Esophagus squamous epithelium (tissue), 5 donors: ENCODE measurements at regions of chr22 and their contacts with region 1.

Region 1: DNA sequence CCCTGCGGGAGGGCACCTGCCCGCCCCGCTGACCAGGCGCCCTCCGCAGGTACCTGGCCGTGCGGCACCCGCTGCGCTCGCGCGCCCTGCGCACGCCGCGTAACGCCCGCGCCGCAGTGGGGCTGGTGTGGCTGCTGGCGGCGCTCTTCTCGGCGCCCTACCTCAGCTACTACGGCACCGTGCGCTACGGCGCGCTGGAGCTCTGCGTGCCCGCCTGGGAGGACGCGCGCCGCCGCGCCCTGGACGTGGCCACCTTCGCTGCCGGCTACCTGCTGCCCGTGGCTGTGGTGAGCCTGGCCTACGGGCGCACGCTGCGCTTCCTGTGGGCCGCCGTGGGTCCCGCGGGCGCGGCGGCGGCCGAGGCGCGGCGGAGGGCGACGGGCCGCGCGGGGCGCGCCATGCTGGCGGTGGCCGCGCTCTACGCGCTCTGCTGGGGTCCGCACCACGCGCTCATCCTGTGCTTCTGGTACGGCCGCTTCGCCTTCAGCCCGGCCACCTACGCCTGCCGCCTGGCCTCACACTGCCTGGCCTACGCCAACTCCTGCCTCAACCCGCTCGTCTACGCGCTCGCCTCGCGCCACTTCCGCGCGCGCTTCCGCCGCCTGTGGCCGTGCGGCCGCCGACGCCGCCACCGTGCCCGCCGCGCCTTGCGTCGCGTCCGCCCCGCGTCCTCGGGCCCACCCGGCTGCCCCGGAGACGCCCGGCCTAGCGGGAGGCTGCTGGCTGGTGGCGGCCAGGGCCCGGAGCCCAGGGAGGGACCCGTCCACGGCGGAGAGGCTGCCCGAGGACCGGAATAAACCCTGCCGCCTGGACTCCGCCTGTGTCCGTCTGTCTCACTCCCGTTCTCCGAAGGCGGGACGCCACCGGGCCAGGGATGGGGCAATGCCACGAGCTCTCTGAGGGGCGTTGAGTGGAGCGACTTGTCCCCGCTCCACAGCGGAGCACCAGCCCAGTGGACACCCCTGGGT is 1.8 kb downstream of the GALR3 start:
- DNase-seq: no peak
- H3K4me3 ChIP-seq: peak overlapping the region; percentile 23 to 57 (median 36)
- H3K27ac ChIP-seq: no peak overlapping the region
- H3K4me1 ChIP-seq: peaks cover 0 to 16% (median 12%) of the 10 kb centered on the region in 3 donors
- H3K27me3 ChIP-seq: peaks cover 0 to 51% (median 0%) of the 10 kb centered on the region in 4 donors
- CTCF ChIP-seq: peak in 1 of 6 experiments; percentile 31
- POLR2A ChIP-seq: no peak

Region 2: DNA sequence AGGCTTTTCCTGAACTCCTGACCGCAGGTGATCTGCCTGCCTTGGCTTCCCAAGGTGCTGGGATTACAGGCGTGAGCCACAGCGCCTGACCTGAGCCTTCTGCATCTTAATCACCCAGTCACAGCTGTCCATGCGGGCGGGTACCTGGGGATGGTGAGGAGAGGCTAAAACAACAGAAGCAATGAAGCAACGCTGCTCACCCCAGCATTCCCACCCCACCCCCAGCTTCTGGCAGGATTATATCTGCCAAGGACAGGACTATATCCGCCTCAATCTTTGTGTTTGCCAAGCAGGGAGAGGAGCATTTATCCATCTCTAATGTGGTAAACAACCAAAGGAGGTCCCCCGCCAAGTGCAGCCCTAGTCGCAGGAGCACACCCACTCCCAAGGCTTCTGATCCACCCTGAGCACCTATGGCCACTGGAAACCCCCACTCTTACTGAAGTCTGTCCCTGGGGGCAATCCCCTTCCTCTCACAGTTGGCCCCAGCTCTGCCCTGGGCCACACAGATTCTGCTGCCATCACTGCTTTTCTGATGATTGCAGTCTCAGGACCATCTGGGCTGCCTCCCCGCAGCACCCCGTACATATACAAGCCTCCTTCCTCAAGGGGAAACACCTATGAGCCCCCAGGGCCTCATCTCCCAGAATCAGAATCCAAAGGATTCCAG is 236.3 kb before region 1 on chr22:
- intact Hi-C with region 1: no loop called
- DNase-seq: no peak
- H3K4me3 ChIP-seq: no peak overlapping the region
- H3K27ac ChIP-seq: no peak overlapping the region
- H3K4me1 ChIP-seq: peaks cover 3 to 34% (median 5%) of the 10 kb centered on the region in 3 donors
- H3K27me3 ChIP-seq: no peaks in the 10 kb centered on the region
- CTCF ChIP-seq: no peak
- POLR2A ChIP-seq: no peak

Region 3: GRCh38 chr22:37965940-37966664 is 141.1 kb after region 1 on chr22:
- intact Hi-C with region 1: loop called (anchors 10 kb)
- DNase-seq: no peak
- H3K4me3 ChIP-seq: no peak overlapping the region
- H3K27ac ChIP-seq: no peak overlapping the region
- H3K4me1 ChIP-seq: peaks cover 0 to 13% (median 0%) of the 10 kb centered on the region in 3 donors
- H3K27me3 ChIP-seq: no peaks in the 10 kb centered on the region
- CTCF ChIP-seq: no peak
- POLR2A ChIP-seq: no peak